GM10248 (cell line): ENCODE measurements at regions of chr1 and their contacts with region 1.

Region 1: DNA sequence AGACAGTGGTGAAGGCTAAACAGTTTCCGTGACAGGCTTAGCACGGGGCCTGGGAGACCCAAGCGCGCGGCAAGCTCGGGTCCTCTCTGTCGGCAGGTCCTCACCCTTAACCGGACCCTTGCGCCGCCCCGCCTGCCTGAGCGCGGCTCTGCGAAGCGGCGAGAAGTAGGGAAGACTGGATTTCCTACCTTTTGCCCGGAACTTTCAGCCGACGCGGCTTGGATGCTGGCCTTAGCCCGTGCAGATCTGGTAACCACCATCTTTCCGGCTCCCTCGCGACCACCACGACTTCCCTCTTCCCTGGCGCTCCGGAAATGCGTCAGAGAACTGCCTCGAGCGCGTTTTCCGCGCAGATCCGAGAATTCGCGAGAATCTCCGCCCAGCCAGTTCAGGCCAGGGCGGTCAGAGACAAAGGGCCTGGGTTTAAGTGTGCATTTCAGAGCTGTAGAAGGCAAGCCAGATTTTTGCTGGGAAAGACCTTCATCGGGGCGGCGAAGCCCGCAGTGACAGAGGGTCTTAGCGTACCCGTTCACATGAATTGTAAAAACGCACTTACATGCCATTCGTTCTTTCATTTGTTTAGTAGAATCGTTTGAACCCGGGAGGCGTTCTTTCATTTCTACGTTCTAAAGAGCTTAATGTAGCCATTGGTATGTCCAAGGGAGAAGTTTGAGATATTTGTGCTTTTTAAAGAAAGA is at the start of gene DNTTIP2:
- DNase-seq: peak; percentile 94
- CTCF ChIP-seq: no peak

Region 2: DNA sequence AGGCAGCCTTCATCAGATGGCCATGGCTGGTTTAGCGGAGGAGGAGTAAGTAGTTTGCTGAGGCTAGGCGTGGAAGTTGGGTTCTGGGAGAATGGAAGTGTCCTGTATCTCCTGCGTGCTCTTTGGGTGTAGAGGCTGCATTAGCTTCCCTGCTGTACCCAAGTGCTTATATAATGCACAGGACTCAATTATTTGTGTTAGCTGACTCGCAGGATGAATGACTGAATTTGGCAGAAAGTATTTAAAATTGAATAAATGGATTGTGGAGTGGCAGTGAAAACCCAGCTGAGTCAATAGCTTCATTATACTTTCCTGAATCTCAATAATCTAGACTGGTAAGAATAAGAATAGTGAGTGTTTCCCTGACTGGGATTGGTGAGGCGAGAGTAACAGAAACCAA is 13.8 kb before region 1 on chr1:
- CTCF ChIA-PET with region 1: no interaction called
- POLR2A ChIA-PET with region 1: no interaction called
- DNase-seq: no peak
- CTCF ChIP-seq: no peak

Region 3: DNA sequence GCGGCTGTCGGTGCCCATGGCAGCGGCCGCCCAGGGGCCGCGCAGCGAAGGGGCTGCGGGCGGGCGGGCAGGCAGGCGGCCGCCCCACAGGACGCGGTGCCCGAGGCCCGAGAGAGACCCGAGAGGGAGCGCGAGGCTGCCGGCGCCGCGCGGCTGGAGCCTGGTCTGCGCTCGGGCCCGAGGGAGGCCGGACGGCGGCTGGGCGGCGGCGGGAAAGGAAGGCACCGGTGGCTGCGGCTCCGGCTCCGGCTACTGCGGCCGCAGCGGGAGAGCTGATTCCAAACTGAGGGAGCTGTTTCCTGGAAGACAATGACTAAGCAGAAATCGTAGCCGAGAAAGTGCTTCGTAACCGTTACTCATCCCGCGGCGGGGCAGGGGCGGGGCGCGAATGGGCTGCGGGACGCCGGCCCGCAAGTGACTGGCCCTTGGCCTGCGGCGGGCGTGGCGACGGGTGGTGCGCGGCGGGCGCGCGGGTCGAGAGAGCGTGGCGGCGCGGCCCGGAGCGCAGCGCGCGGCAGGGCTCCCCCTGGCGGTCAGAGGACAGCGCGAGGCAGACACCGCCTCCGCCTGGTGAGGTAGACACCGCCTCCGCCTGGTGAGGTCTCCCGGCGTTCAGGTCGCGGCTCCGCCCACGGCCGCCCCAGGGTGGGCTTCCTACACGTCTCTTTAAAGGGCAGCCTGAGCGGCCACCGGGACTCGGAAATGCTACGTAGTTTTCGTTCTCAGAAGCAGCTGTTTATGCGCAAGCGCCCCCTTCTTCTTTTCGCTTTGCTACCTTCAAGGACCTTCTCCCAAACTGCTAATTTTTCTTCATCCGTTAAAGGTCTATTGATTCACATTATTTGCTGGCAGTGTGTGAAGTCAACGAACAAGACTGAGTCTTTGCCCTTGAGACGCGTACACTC is 30.4 kb after region 1 on chr1 and contains the start of gene GCLM:
- CTCF ChIA-PET with region 1: interaction called, 14 read pairs
- POLR2A ChIA-PET with region 1: no interaction called
- DNase-seq: peak; percentile 93
- CTCF ChIP-seq: peak; percentile 97

Region 4: DNA sequence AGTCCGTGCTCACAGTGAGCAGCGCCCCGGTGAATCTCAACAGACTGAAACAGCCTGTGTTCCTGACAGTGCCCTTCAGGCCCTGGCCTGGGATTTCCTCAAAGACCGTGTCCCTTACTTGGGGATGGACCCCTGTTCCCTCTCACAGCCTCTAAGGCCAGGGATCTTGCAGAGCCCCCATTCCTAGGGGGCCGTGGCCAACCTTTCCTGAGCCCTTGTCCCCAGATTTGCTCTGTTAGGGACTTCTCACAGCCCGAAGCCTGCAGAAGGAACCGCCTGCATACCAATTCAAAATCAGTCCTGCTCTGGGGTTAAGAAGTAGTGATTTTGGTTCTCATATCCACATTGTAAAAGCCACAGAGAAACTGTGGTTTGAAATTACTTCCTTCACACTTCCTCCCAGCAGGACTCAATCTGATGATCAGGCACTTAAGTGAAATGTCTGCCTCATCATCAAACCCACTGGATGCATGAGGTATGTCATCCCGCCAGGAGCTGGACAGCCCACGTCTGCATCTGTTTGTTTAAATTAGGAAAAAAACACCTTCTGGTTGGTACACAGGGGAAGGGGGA is 227.0 kb after region 1 on chr1:
- CTCF ChIA-PET with region 1: no interaction called
- POLR2A ChIA-PET with region 1: no interaction called
- DNase-seq: no peak
- CTCF ChIP-seq: no peak